ENCODE measurements at regions of chr4 and their contacts with region 1.

Region 1: DNA sequence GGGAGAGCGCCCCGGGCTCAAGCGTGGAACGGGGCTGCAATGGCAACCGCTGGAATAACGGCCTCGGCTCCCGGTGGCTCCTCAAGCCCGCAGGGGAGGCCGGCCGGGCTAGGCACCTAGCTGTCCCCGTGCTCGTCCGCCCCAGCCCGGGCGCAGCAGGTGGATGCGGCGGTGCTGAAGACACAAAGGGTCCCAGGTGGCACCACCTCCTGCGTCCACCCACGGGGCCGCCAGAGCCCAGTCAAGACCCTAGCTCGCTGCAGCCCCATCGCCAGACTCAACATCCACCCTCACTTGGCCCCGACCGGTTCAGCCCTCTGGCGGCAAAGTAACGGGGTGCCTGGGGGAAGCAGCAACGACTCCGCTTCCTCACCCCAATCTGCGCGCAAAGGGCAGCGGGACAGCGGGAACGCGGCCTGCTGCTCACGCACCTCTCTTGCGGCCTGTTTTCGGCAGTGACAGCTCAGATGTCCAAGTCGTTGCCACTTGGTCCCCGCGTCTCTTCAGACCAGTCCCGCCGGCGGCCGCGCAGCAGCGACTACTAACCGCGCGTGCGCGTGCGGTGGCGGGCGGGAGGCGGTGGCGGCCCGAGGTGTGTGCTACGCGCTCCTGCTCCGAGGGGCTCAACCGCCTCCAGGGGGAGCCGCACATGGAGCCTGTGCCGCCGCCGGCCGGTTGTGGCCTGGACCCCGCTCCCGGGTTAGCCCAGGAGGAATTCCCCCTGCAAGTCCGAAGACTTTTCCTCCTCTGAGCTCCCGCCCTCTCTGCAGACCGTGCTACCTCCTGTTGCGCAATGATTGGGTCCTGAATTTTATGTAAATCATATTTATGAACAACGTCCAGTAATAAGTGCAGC is at the start of gene CLGN:
- DNase-seq: peak; percentile 79 to 90
- H3K4me3 ChIP-seq: peak within 1 kb of the TSS; percentile 82
- H3K4me3 Mint-ChIP-seq: peak within 1 kb of the TSS; percentile 80
- H3K27ac Mint-ChIP-seq: peak within 1 kb of the TSS; percentile 65
- H3K4me1 ChIP-seq: 0 out of 2 replicates have a peak, but pooled peaks cover 4% of the 10 kb centered on the region
- H3K4me1 Mint-ChIP-seq: no peaks in the 10 kb centered on the region
- H3K27me3 ChIP-seq: no peaks in the 10 kb centered on the region
- H3K27me3 Mint-ChIP-seq: peaks cover 17% of the 10 kb centered on the region
- CTCF ChIP-seq: peak; percentile 41 to 46
- total RNA-seq, gene CLGN: 2.6 and 5.5 TPM in 2 replicates

Region 2: GRCh38 chr4:140071806-140072205 is 355.5 kb before region 1 on chr4:
- CTCF ChIA-PET with region 1: no interaction called
- POLR2A ChIA-PET with region 1: no interaction called
- intact Hi-C with region 1: no loop called
- DNase-seq: no peak
- H3K4me3 ChIP-seq: no peak overlapping the region
- H3K4me3 Mint-ChIP-seq: no peak overlapping the region
- H3K27ac Mint-ChIP-seq: no peak overlapping the region
- H3K4me1 ChIP-seq: peaks cover 11% of the 10 kb centered on the region
- H3K4me1 Mint-ChIP-seq: peaks cover 28% of the 10 kb centered on the region
- H3K27me3 ChIP-seq: no peaks in the 10 kb centered on the region
- H3K27me3 Mint-ChIP-seq: no peaks in the 10 kb centered on the region
- CTCF ChIP-seq: no peak

Region 3: GRCh38 chr4:140252742-140253555 is 174.4 kb before region 1 on chr4:
- CTCF ChIA-PET with region 1: no interaction called
- POLR2A ChIA-PET with region 1: no interaction called
- intact Hi-C with region 1: no loop called
- DNase-seq: peak; percentile 82 to 87
- H3K4me3 ChIP-seq: peak overlapping the region; percentile 66
- H3K4me3 Mint-ChIP-seq: peak overlapping the region; percentile 0
- H3K27ac Mint-ChIP-seq: peak overlapping the region; percentile 88
- H3K4me1 ChIP-seq: peaks cover 58% of the 10 kb centered on the region
- H3K4me1 Mint-ChIP-seq: peaks cover 26% of the 10 kb centered on the region
- H3K27me3 ChIP-seq: no peaks in the 10 kb centered on the region
- H3K27me3 Mint-ChIP-seq: no peaks in the 10 kb centered on the region
- CTCF ChIP-seq: peak; percentile 79 to 90

Region 4: DNA sequence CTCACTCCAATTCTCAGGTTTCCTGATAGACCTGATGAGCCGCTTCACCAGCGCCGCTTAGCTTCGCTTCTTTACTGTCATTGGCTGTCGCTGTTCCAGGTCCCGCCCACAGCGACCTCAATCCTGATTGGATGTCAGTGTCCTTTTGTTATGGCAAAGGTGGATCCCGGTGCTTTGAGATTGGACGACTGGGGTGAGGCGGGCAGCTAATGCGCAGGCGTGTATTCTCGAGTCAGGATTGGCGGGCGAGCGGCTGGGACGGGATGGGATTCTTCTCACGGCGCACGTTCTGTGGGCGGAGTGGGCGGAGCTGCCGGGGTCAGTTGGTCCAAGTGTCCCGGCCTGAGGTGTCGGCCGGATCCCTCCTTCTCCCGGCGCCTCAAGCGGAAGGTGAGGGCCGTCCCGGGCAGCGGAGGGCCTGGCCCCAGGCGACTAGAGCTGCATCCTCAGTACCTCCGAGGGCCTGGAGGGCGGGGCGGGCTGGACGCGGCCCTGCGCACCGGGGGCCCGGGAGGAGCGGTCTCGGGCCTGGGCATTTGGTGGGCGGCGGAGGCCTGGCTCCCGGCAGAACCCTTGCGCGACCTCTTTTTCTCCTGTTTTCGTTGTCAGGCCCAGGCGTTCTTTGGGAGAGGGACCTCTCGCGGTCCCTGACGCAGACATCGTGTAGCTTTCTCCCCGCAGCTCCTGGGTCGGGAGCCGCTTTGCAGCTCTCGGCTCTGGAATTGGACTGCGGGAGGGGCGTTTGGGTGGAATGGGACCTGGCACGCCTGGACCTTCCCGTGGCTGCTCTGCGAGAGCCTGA is 53.8 kb before region 1 on chr4 and contains the start of gene SCOC:
- CTCF ChIA-PET with region 1: interaction called, 5 read pairs
- POLR2A ChIA-PET with region 1: interaction called, 6 read pairs
- intact Hi-C with region 1: loop called (anchors 5 kb)
- DNase-seq: peak; percentile 98 to 99
- H3K4me3 ChIP-seq: peak within 1 kb of the TSS; percentile 90
- H3K4me3 Mint-ChIP-seq: no peak within 1 kb of the TSS
- H3K27ac Mint-ChIP-seq: no peak within 1 kb of the TSS
- H3K4me1 ChIP-seq: peaks cover 19% of the 10 kb centered on the region
- H3K4me1 Mint-ChIP-seq: peaks cover 7% of the 10 kb centered on the region
- H3K27me3 ChIP-seq: no peaks in the 10 kb centered on the region
- H3K27me3 Mint-ChIP-seq: no peaks in the 10 kb centered on the region
- CTCF ChIP-seq: no peak
- total RNA-seq, gene SCOC: 36.8 and 39.6 TPM in 2 replicates

Region 5: GRCh38 chr4:140523857-140524742 is 96.8 kb after region 1 on chr4 and contains the start of gene ELMOD2:
- CTCF ChIA-PET with region 1: interaction called, 6 read pairs
- POLR2A ChIA-PET with region 1: no interaction called
- intact Hi-C with region 1: loop called (anchors 5 kb)
- DNase-seq: peak; percentile 97 to 98
- H3K4me3 ChIP-seq: peak within 1 kb of the TSS; percentile 85
- H3K4me3 Mint-ChIP-seq: peak within 1 kb of the TSS; percentile 75
- H3K27ac Mint-ChIP-seq: peak within 1 kb of the TSS; percentile 39
- H3K4me1 ChIP-seq: peaks cover 5% of the 10 kb centered on the region; the same call in 1 of the 2 replicates
- H3K4me1 Mint-ChIP-seq: peaks cover under 1% of the 10 kb centered on the region
- H3K27me3 ChIP-seq: no peaks in the 10 kb centered on the region
- H3K27me3 Mint-ChIP-seq: no peaks in the 10 kb centered on the region
- CTCF ChIP-seq: peak; percentile 85 to 90
- total RNA-seq, gene ELMOD2: 26.2 and 28.1 TPM in 2 replicates

Region 6: DNA sequence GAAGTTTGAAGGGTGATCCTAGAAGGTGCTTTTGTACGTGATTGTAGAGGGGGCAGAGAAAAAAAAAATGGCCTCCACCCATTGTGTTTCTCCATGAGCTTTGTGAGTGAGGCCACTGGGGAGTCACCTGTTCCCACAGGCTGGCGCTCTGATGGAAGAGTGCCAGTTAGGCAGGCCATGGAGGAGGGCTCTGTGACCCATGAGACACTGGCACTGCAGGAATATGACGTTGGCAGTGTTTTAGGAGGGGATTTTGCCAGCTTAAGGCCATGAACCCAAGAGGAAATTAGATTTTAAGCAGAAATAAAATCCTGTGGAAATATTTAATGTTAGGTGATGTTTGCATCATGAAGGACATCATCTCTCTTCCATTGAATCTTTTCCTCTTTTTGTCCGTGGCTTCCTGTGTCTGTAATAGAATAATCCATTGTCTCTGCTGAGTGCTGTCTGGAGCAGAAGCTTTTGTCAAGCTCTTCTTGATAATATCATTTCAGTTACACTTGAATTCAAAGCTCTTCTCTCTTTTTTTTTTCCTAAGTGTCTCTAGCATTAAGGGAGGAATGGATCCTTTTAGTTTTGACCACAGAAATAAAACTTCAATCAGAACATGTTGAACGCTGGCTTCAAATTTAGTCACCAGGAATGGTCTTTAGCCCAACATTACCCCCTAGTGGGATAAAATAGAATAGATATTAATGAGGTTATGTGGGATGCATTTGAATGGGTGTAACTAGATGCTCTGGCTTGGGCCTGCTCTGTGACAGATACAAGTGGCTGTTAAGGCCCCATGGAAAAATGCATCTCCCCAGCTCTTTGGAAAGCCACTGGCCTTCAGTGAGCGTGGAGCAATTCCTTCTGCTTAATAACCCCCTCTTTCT is 182.5 kb after region 1 on chr4:
- CTCF ChIA-PET with region 1: no interaction called
- POLR2A ChIA-PET with region 1: no interaction called
- intact Hi-C with region 1: loop called (anchors 2 kb)
- DNase-seq: peak in 1 of 2 experiments; percentile 47
- H3K4me3 ChIP-seq: no peak overlapping the region
- H3K4me3 Mint-ChIP-seq: no peak overlapping the region
- H3K27ac Mint-ChIP-seq: no peak overlapping the region
- H3K4me1 ChIP-seq: peaks cover 10% of the 10 kb centered on the region
- H3K4me1 Mint-ChIP-seq: no peaks in the 10 kb centered on the region
- H3K27me3 ChIP-seq: no peaks in the 10 kb centered on the region
- H3K27me3 Mint-ChIP-seq: no peaks in the 10 kb centered on the region
- CTCF ChIP-seq: peak; percentile 39 to 40

Measured in Caco-2 (cell line).